ENCODE measurements at regions of chr4 and their contacts with region 1.

Region 1: GRCh38 chr4:185638548-185639301 is 103.4 kb upstream of the PDLIM3 start:
- DNase-seq: peak in 1 of 2 experiments; percentile 37
- H3K4me3 ChIP-seq: no peak overlapping the region
- H3K4me1 ChIP-seq: no peaks in the 10 kb centered on the region; the same call in 1 of the 2 replicates
- H3K27me3 ChIP-seq: 0 out of 2 replicates have a peak, but pooled peaks cover 3% of the 10 kb centered on the region

Region 2: GRCh38 chr4:185128272-185129119 is 510.2 kb before region 1 on chr4:
- in situ Hi-C with region 1: no loop called
- DNase-seq: peak in 1 of 2 experiments; percentile 57
- H3K4me3 ChIP-seq: peak overlapping the region; percentile 34
- H3K4me1 ChIP-seq: peaks cover 3% of the 10 kb centered on the region; the same call in 1 of the 2 replicates
- H3K27me3 ChIP-seq: no peaks in the 10 kb centered on the region

Region 3: DNA sequence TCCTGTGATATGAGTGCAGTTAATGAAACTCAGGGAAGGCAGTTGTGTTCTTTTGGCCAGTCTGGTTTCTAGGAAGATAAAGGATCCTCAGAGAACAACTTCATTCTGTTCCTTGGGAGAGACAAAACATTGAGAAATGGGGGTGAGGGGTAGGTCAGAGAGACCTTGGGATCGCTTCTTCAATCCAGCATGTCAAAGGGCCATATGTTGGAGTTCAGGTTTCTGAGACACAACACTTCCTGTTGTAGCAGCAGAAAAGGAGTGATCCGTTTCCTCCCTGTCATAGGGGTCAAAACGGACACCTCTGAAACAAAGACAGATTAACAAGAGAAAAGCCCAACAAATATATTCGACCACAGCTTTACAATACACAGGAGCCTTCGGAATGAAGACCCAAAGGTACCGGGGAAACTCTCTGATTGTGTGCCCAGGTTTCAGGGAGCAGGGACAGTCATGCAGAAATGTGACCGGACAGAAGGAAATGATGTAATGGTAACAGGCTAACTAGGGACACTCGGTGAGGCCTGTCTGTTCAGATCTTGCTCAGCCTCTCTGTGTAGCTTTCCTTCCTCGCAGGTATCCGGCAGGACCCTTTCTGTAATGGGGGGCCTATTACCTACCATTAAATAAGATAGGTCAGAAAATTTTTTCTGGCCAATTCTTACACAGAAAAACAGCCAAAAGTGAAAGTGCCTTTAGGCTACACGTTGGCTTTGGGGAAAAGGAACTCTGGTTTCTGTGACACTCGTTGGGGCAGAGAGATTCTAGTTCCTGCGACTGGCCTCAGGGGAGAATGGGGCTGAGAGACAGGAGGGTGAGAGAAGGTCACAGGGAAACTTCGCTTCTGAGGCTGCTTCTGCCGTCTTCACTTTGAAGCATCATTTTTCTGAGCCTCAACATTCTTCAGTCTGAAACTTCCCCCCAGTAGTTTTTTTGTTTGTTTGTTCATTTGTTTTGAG is 327.0 kb after region 1 on chr4:
- in situ Hi-C with region 1: no loop called
- DNase-seq: no peak
- H3K4me3 ChIP-seq: no peak overlapping the region
- H3K4me1 ChIP-seq: no peaks in the 10 kb centered on the region; the same call in 1 of the 2 replicates
- H3K27me3 ChIP-seq: peaks cover 5% of the 10 kb centered on the region; the same call in 1 of the 2 replicates

Region 4: GRCh38 chr4:186029571-186030398 is 391.1 kb after region 1 on chr4:
- in situ Hi-C with region 1: loop called (anchors 5 kb)
- DNase-seq: peak; percentile 45 to 63
- H3K4me3 ChIP-seq: no peak overlapping the region
- H3K4me1 ChIP-seq: peaks cover 10% of the 10 kb centered on the region
- H3K27me3 ChIP-seq: no peaks in the 10 kb centered on the region

Measured in HAP-1 (cell line).